ENCODE measurements at regions of chr18 and their contacts with region 1.

Region 1: DNA sequence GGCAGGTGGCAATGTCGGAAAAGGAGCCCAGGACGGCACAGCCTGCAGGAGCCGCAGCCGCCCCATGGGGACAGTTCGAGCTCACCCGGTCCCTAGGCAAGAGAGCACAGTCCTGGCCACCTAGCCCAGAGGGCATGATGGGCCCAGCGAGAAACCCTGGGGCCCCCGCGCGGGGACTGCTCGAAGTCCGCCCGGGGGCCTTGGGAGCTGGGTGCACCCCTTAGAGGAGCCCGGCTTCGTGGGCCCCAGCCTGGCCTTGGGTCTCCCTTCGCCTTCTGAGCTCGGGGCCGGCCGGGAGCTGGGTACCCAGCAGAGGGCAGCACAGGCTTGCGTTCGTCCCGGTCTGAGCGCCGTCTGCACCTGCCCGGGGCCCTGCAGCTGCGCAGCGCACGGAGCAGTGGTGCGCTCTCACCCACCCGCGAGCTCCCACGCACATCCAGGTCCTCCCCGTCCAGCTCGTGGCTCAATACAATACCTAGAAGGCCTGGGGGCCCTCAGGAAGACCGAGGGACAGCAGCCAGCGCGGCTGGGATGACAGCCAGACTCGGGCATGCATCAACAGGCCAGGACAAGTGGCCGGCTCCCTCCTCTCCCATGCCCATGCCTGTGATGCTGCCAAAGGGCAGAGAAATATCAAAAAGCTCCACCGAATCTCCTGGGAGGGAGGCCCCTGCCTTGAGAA is 96.2 kb upstream of the ZNF532 start:
- DNase-seq: peak; percentile 74
- ATAC-seq: peak; percentile 93 to 95
- H3K4me3 ChIP-seq: peak overlapping the region; percentile 41
- H3K27ac ChIP-seq: no peak overlapping the region
- H3K4me1 ChIP-seq: peaks cover 17% of the 10 kb centered on the region
- H3K27me3 ChIP-seq: peaks cover 18% of the 10 kb centered on the region
- CTCF ChIP-seq: peak; percentile 82

Region 2: GRCh38 chr18:58529714-58530354 is 238.6 kb before region 1 on chr18:
- intact Hi-C with region 1: loop called (anchors 5 kb)
- DNase-seq: peak; percentile 66
- ATAC-seq: peak; percentile 76
- H3K4me3 ChIP-seq: no peak overlapping the region
- H3K27ac ChIP-seq: no peak overlapping the region
- H3K4me1 ChIP-seq: no peaks in the 10 kb centered on the region
- H3K27me3 ChIP-seq: no peaks in the 10 kb centered on the region
- CTCF ChIP-seq: peak; percentile 81